ENCODE measurements at regions of chr2 and their contacts with region 1.

Region 1: DNA sequence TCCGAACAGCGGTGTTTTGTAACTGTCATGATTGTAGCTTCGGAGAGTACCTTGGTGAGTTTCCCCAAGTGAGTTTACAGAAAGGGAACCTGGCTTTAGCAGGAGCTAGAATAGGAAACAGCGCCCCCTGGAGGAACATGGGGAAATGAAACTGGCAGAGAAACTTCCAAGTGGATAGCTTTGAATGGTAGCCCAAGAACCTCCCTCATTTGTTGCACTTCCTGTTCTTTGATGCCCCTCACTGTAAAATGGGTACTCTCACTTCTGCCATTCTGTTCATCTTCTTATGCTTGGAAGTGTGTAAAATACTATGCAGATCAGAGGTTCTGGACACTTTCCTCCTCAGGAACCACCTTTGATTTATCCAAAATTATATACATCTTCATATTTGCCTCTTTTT is 36.2 kb downstream of the CHST10 start:
- DNase-seq: peak in 4 of 5 donors; percentile 38 to 57 (median 54)
- H3K4me3 ChIP-seq: no peak overlapping the region
- H3K4me3 Mint-ChIP-seq: no peak overlapping the region
- H3K27ac ChIP-seq: no peak overlapping the region
- H3K27ac Mint-ChIP-seq: no peak overlapping the region
- H3K4me1 ChIP-seq: no peaks in the 10 kb centered on the region
- H3K4me1 Mint-ChIP-seq: peaks cover 0 to 1% (median 0%) of the 10 kb centered on the region in 4 donors
- H3K27me3 ChIP-seq: no peaks in the 10 kb centered on the region
- H3K27me3 Mint-ChIP-seq: peaks cover 2 to 11% of the 10 kb centered on the region in 2 donors

Region 2: GRCh38 chr2:99559075-99559662 is 822.1 kb before region 1 on chr2:
- CTCF ChIA-PET with region 1: interaction called, 32 read pairs
- POLR2A ChIA-PET with region 1: no interaction called
- intact Hi-C with region 1: no loop called
- DNase-seq: peak; percentile 58 to 69 (median 65)
- H3K4me3 ChIP-seq: no peak overlapping the region
- H3K4me3 Mint-ChIP-seq: peak overlapping the region in 3 of 8 donors; percentile 42 to 66 (median 59)
- H3K27ac ChIP-seq: no peak overlapping the region
- H3K27ac Mint-ChIP-seq: no peak overlapping the region
- H3K4me1 ChIP-seq: no peaks in the 10 kb centered on the region
- H3K4me1 Mint-ChIP-seq: peaks cover 0 to 2% (median 0%) of the 10 kb centered on the region in 4 donors
- H3K27me3 ChIP-seq: no peaks in the 10 kb centered on the region
- H3K27me3 Mint-ChIP-seq: peaks cover 3% of the 10 kb centered on the region in 2 donors

Region 3: DNA sequence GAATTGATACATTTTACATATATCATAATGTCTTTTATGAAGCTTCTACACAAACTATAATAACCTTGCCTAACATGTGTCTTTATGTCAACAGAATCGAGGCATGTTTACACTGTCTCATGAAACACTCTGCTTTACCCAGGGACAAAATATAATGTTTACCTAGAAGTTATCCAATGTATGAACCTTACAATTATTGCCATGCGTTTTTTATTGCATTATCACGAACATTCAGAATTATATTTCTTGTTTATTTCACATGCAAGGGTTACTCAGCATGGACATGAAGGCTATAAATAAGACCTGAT is 78.7 kb before region 1 on chr2:
- CTCF ChIA-PET with region 1: no interaction called
- POLR2A ChIA-PET with region 1: no interaction called
- intact Hi-C with region 1: no loop called
- DNase-seq: no peak
- H3K4me3 ChIP-seq: no peak overlapping the region
- H3K4me3 Mint-ChIP-seq: no peak overlapping the region
- H3K27ac ChIP-seq: no peak overlapping the region
- H3K27ac Mint-ChIP-seq: no peak overlapping the region
- H3K4me1 ChIP-seq: no peaks in the 10 kb centered on the region
- H3K4me1 Mint-ChIP-seq: no peaks in the 10 kb centered on the region
- H3K27me3 ChIP-seq: no peaks in the 10 kb centered on the region
- H3K27me3 Mint-ChIP-seq: peaks cover 7 to 9% of the 10 kb centered on the region in 2 donors

Region 4: DNA sequence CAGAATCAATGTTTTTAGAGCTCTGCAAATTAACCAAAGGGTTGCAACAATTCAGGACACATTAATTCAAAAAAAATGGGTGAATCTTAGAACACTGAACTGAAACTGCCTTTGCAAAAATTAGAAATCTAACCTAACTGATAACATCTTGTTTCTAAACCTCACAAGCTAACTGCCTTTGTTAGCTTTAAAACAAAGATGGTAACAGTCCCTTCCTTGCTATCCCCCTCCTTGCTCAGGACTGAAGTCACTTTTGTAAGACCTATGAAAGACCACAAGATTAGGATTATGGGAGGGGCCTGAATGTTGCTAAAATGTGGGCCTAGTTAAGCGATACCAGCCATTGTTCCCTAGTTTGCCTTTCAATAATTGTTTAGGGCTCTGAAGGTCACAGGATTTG is 14.1 kb before region 1 on chr2:
- CTCF ChIA-PET with region 1: interaction called, 38 read pairs
- POLR2A ChIA-PET with region 1: no interaction called
- intact Hi-C with region 1: no loop called
- DNase-seq: no peak
- H3K4me3 ChIP-seq: no peak overlapping the region
- H3K4me3 Mint-ChIP-seq: no peak overlapping the region
- H3K27ac ChIP-seq: no peak overlapping the region
- H3K27ac Mint-ChIP-seq: no peak overlapping the region
- H3K4me1 ChIP-seq: no peaks in the 10 kb centered on the region
- H3K4me1 Mint-ChIP-seq: no peaks in the 10 kb centered on the region
- H3K27me3 ChIP-seq: no peaks in the 10 kb centered on the region
- H3K27me3 Mint-ChIP-seq: peaks cover 11 to 14% of the 10 kb centered on the region in 2 donors

Region 5: DNA sequence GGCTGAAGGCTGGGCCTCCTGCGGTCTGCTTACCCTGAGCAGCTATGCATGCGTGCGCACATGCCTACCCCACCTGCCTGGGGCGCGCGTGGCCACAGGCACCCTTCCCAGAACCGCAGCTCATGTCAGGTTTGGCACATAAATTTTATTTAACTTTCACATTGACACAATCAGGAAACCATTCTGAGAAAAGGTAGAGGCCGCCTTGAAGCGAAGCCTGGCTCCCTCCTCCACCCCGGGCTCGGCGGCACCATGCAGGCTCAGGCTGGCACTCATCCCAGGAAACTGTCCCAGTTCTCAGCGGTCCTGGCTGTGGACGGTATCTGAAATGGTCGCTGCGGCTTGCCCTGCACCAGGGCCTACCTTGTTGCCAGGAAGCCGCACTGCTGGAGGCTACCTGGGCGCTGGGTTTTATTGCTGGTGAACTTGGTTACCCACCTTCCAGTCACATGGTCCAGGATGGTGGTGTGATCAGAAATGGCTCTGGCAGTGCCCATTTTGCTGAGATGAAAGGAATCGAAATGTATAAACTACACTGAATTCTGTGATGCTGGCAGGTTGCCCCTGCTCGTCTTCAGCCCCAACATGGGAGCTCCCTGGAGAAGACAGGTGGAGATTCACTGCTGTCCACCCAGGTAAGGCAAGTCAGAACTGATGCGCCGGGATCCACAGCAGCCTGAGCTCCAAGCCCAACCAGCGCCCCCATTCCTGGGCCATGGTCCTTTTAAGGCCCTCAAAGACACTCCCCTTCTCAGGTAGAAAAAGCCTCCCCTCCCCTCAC is 10.7 kb after region 1 on chr2:
- CTCF ChIA-PET with region 1: interaction called, 23 read pairs
- POLR2A ChIA-PET with region 1: no interaction called
- intact Hi-C with region 1: no loop called
- DNase-seq: no peak
- H3K4me3 ChIP-seq: no peak overlapping the region
- H3K4me3 Mint-ChIP-seq: no peak overlapping the region
- H3K27ac ChIP-seq: no peak overlapping the region
- H3K27ac Mint-ChIP-seq: no peak overlapping the region
- H3K4me1 ChIP-seq: no peaks in the 10 kb centered on the region
- H3K4me1 Mint-ChIP-seq: no peaks in the 10 kb centered on the region
- H3K27me3 ChIP-seq: no peaks in the 10 kb centered on the region
- H3K27me3 Mint-ChIP-seq: no peaks in the 10 kb centered on the region

Region 6: DNA sequence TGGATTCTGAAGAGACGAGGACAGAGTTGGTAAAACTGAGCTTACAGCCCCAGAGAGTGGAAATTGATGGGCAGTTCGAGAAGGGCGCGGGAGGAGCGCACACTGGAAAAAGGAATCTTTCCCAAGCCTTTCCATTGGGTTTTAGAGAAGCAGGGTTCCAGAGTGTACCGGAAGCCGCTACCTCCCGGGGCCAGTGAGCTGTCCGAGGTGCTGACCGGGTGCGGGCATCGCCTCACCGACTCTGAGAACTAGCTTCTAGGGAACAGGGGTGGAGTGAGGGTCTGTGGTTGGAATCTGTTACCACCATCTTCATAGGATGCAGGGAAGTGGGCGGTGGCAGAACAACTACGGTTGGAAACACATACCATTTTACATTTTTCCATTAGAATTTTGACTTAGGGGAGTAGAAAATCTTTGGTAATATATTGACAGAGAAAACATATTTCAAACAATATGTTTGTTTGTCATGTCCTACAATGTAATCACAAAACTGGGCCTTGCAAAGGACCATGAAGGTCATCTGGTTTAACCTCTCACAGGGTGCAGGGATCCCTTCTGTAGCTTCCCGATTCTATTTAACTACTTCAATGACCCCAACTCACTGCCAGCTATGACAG is 89.8 kb after region 1 on chr2:
- CTCF ChIA-PET with region 1: no interaction called
- POLR2A ChIA-PET with region 1: no interaction called
- intact Hi-C with region 1: no loop called
- DNase-seq: no peak
- H3K4me3 ChIP-seq: no peak overlapping the region
- H3K4me3 Mint-ChIP-seq: no peak overlapping the region
- H3K27ac ChIP-seq: no peak overlapping the region
- H3K27ac Mint-ChIP-seq: no peak overlapping the region
- H3K4me1 ChIP-seq: no peaks in the 10 kb centered on the region
- H3K4me1 Mint-ChIP-seq: no peaks in the 10 kb centered on the region
- H3K27me3 ChIP-seq: no peaks in the 10 kb centered on the region
- H3K27me3 Mint-ChIP-seq: peaks cover 27 to 34% of the 10 kb centered on the region in 2 donors

Measured in CD4-positive, alpha-beta memory T cell (primary cell).